ENCODE measurements at regions of chr1 and their contacts with region 1.

Region 1: DNA sequence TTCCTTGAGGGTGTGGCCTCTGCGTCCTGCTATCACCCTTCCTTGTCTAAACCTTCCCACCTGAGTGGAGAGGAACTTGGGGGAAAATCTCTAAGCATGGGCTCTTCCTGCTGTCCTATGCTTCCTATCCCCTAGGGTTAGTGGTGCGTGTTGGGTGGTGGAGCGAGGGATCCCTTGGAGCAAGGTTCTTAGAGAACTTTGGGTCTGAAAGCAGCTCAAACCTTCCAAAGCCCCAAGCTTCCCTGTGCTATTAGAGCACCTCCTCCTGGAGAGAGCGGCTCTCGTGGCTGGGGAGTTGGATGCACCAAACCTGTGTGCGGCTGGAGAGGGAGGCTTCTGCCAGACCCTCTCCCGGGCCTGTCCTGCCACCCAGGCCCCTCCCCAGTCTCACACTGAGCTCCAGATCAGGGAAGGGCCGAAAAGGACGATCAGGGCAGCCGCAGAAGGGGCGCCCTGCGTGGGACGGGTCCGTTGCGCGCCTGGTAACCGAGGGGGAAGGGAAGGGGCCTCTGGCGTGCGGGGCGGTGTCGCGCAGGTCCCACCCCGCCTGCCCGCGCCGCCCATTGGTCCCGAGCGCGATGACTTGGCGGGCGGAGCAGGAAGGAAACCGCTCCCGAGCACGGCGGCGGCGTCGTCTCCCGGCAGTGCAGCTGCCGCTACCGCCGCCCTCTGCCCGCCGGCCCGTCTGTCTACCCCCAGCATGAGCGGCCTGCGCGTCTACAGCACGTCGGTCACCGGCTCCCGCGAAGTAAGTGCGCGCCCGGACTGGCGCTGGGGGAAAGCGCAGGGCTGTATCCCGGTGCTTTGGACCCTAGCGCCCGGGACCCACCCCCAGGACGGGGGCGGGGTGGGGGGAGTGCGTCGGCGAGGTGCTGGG is at the start of gene SH3BGRL3:
- DNase-seq: peak; percentile 55
- ATAC-seq: peak; percentile 90
- H3K4me3 ChIP-seq: peak within 1 kb of the TSS; percentile 61 to 78 (median 68); a peak in 5 of 6 replicates
- H3K27ac ChIP-seq: peak within 1 kb of the TSS; percentile 51
- H3K4me1 ChIP-seq: peaks cover 39% of the 10 kb centered on the region
- H3K27me3 ChIP-seq: no peaks in the 10 kb centered on the region
- CTCF ChIP-seq: peak; percentile 66
- EP300 ChIP-seq: no peak
- POLR2A ChIP-seq: peak; percentile 51 to 77
- RAD21 ChIP-seq: peak; percentile 38; the same call in 1 of the 2 replicates
- total RNA-seq, gene SH3BGRL3: 12.2 and 13.4 TPM in 2 replicates

Region 2: GRCh38 chr1:26265405-26265804 is 14.3 kb before region 1 on chr1:
- CTCF ChIA-PET with region 1: no interaction called
- POLR2A ChIA-PET with region 1: no interaction called
- in situ Hi-C with region 1: no loop called
- intact Hi-C with region 1: no loop called
- DNase-seq: no peak
- ATAC-seq: no peak
- H3K4me3 ChIP-seq: no peak overlapping the region
- H3K27ac ChIP-seq: no peak overlapping the region
- H3K4me1 ChIP-seq: no peaks in the 10 kb centered on the region
- H3K27me3 ChIP-seq: no peaks in the 10 kb centered on the region
- CTCF ChIP-seq: no peak
- EP300 ChIP-seq: no peak
- POLR2A ChIP-seq: no peak
- RAD21 ChIP-seq: no peak

Region 3: GRCh38 chr1:26321315-26322041 is 41.8 kb after region 1 on chr1:
- CTCF ChIA-PET with region 1: interaction called, 22 read pairs
- POLR2A ChIA-PET with region 1: no interaction called
- in situ Hi-C with region 1: loop called (anchors 5 kb)
- intact Hi-C with region 1: loop called (anchors 2 kb)
- DNase-seq: peak; percentile 69
- ATAC-seq: peak; percentile 92
- H3K4me3 ChIP-seq: no peak overlapping the region; a peak in 1 of 6 replicates
- H3K27ac ChIP-seq: no peak overlapping the region
- H3K4me1 ChIP-seq: no peaks in the 10 kb centered on the region
- H3K27me3 ChIP-seq: no peaks in the 10 kb centered on the region
- CTCF ChIP-seq: peak; percentile 96
- EP300 ChIP-seq: no peak
- POLR2A ChIP-seq: no peak
- RAD21 ChIP-seq: peak; percentile 94

Region 4: GRCh38 chr1:26358411-26359384 is 79.0 kb after region 1 on chr1:
- CTCF ChIA-PET with region 1: interaction called, 51 read pairs
- POLR2A ChIA-PET with region 1: interaction called, 13 read pairs
- in situ Hi-C with region 1: no loop called
- intact Hi-C with region 1: no loop called
- DNase-seq: peak; percentile 90
- ATAC-seq: peak; percentile 84
- H3K4me3 ChIP-seq: peak overlapping the region in 2 of 3 experiments; percentile 16 to 49; a peak in 4 of 6 replicates
- H3K27ac ChIP-seq: peak overlapping the region; percentile 81
- H3K4me1 ChIP-seq: peaks cover 88% of the 10 kb centered on the region
- H3K27me3 ChIP-seq: no peaks in the 10 kb centered on the region
- CTCF ChIP-seq: peak; percentile 49
- EP300 ChIP-seq: no peak; a peak in 1 of 4 replicates
- POLR2A ChIP-seq: peak in 1 of 2 experiments; percentile 58; a peak in 2 of 4 replicates
- RAD21 ChIP-seq: peak; percentile 51

Region 5: GRCh38 chr1:26363549-26364448 is 84.1 kb after region 1 on chr1:
- CTCF ChIA-PET with region 1: interaction called, 51 read pairs
- POLR2A ChIA-PET with region 1: interaction called, 13 read pairs
- in situ Hi-C with region 1: no loop called
- intact Hi-C with region 1: no loop called
- DNase-seq: peak; percentile 71
- ATAC-seq: peak; percentile 77
- H3K4me3 ChIP-seq: 0 out of 6 replicates have a peak overlapping the region, but pooled peaks of 1 of the 3 experiments have one; percentile 18
- H3K27ac ChIP-seq: no peak overlapping the region
- H3K4me1 ChIP-seq: peaks cover 57% of the 10 kb centered on the region
- H3K27me3 ChIP-seq: peaks cover 0 to 1% of the 10 kb centered on the region in 2 experiments; a peak in 2 of 5 replicates
- CTCF ChIP-seq: peak; percentile 95
- EP300 ChIP-seq: no peak
- POLR2A ChIP-seq: no peak
- RAD21 ChIP-seq: peak; percentile 96

Region 6: GRCh38 chr1:26391450-26391849 is 111.8 kb after region 1 on chr1:
- CTCF ChIA-PET with region 1: interaction called, 22 read pairs
- POLR2A ChIA-PET with region 1: no interaction called
- in situ Hi-C with region 1: loop called (anchors 5 kb)
- intact Hi-C with region 1: loop called (anchors 1 kb)
- DNase-seq: peak; percentile 52
- ATAC-seq: peak; percentile 67
- H3K4me3 ChIP-seq: no peak overlapping the region
- H3K27ac ChIP-seq: no peak overlapping the region
- H3K4me1 ChIP-seq: peaks cover 55% of the 10 kb centered on the region
- H3K27me3 ChIP-seq: no peaks in the 10 kb centered on the region; a peak in 2 of 5 replicates
- CTCF ChIP-seq: peak; percentile 81
- EP300 ChIP-seq: no peak
- POLR2A ChIP-seq: no peak
- RAD21 ChIP-seq: peak; percentile 87